Activated B cell treated with CpG ODN at 0.5 μM for 24 hours (primary cell): ENCODE measurements at regions of chr1 and their contacts with region 1.

Region 1: DNA sequence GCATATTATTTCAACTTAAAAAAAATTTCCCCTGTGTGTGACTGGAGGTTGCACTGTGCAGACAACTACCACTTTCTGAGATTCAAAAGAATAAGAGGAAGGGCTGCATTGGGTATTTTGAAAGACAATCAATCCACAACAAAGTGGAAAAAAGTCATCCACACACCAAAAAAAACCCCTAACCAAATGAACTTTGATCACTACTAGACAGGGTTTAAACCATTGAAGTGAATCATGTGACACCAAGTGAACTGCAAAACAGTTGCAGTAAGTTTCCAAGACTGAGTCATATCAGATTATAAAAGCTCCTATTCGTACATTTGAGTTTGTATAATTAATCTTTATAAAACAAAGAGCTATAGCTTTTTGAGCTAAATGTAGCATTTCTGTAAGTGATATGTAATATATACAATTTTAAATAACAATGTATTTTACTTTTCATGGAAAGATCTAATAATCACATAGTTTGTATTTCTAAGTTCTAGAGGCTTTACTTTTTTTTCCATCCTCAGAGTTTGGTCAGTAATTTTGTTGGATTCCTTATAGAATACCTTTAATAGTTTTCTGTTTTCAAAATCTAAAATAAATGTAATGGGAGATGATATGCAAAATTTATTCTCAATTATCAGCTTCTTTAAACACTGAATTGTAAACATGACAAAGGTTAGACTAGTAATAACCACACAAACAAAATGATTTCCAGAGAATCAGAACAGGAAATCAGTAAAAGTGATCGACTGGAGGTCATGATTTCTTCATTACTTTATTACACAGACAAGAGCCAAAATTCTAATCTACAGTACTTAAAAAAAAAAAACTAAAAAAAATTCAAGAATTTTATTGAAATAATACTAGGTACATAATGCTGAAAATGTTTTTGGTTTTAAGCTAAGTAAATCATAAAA is 50.5 kb upstream of the GFI1 start:
- DNase-seq: no peak
- ATAC-seq: peak; percentile 75
- H3K4me3 Mint-ChIP-seq: peak overlapping the region; percentile 59
- H3K27ac Mint-ChIP-seq: peak overlapping the region; percentile 65
- H3K4me1 Mint-ChIP-seq: peaks cover 45% of the 10 kb centered on the region
- H3K27me3 Mint-ChIP-seq: no peaks in the 10 kb centered on the region
- CTCF ChIP-seq: no peak

Region 2: DNA sequence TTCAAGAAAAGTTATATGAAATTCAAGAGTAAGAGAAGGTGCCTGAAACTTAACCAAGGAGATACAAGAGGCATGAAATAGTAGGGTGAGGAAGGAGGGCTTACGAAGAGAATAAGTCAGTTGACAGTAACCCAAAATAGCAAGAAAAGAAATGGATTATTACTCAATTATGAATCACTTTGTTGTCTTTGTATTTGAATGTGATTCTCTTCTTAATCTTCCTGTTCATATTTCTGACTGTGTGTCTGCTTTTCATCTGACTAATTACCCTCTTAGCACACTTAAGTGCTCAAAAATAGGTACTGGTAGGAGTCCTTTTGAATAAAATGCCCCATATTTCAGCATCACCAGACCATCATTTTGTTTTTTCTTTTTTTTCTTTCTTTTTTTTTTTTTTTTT is 277.9 kb before region 1 on chr1:
- CTCF ChIA-PET with region 1: no interaction called
- POLR2A ChIA-PET with region 1: no interaction called
- intact Hi-C with region 1: no loop called
- DNase-seq: no peak
- ATAC-seq: no peak
- H3K4me3 Mint-ChIP-seq: no peak overlapping the region
- H3K27ac Mint-ChIP-seq: no peak overlapping the region
- H3K4me1 Mint-ChIP-seq: no peaks in the 10 kb centered on the region
- H3K27me3 Mint-ChIP-seq: no peaks in the 10 kb centered on the region
- CTCF ChIP-seq: no peak

Region 3: GRCh38 chr1:92461364-92462097 is 75.7 kb before region 1 on chr1:
- CTCF ChIA-PET with region 1: no interaction called
- POLR2A ChIA-PET with region 1: no interaction called
- intact Hi-C with region 1: loop called (anchors 2 kb)
- DNase-seq: no peak
- ATAC-seq: peak; percentile 50
- H3K4me3 Mint-ChIP-seq: no peak overlapping the region
- H3K27ac Mint-ChIP-seq: no peak overlapping the region
- H3K4me1 Mint-ChIP-seq: peaks cover 19% of the 10 kb centered on the region
- H3K27me3 Mint-ChIP-seq: peaks cover 4% of the 10 kb centered on the region
- CTCF ChIP-seq: no peak

Region 4: DNA sequence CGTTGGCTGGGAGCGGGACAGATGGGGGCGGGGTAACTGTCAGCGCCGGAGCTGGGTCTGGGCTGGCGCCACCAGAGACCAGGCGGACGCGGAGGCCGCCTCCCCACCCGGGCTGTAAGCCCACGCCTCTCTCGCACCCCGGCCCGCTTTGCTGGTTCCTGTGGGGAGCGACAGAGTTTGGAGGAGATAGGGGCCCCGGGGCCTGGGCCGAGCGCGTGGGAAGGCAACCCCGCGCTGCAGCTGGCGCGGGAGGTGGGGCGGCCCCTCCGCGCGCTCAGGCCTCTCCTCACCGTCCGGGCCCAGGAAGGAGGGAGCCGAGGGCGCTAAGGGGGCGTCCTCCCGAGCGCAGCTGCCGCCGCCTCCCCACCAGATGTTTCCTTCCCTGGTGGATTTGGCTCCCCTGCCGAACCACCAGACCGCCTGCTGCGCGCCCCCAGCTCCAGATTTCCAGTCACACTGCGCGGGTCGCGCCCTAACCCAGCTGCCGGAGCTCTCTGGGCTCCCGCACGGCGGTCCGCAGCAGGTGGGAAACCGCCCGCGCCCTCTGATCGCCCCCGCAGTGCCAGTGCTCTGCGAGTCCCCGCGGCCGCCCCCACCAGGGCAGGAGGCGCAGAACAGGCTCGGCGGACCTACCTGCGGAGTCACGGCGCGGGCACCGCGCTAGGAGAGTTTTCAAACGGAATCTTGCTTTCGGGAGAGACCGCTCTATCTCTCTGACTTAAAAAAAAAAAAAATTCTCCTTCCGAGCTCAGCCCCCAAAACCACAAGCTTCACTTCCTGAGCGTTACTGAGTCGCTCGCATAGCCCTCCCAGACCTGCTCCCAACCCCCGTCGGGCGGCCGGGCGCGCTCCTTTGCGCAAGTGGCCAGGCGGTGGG is 51.6 kb before region 1 on chr1:
- CTCF ChIA-PET with region 1: interaction called, 5 read pairs
- POLR2A ChIA-PET with region 1: interaction called, 17 read pairs
- intact Hi-C with region 1: loop called (anchors 1 kb)
- DNase-seq: peak; percentile 67
- ATAC-seq: peak; percentile 70
- H3K4me3 Mint-ChIP-seq: peak overlapping the region; percentile 90
- H3K27ac Mint-ChIP-seq: no peak overlapping the region
- H3K4me1 Mint-ChIP-seq: peaks cover 27% of the 10 kb centered on the region
- H3K27me3 Mint-ChIP-seq: peaks cover 14% of the 10 kb centered on the region
- CTCF ChIP-seq: no peak

Region 5: GRCh38 chr1:92583821-92584760 is 46.9 kb after region 1 on chr1:
- CTCF ChIA-PET with region 1: no interaction called
- POLR2A ChIA-PET with region 1: no interaction called
- intact Hi-C with region 1: loop called (anchors 10 kb)
- DNase-seq: no peak
- ATAC-seq: peak; percentile 40
- H3K4me3 Mint-ChIP-seq: no peak overlapping the region
- H3K27ac Mint-ChIP-seq: no peak overlapping the region
- H3K4me1 Mint-ChIP-seq: no peaks in the 10 kb centered on the region
- H3K27me3 Mint-ChIP-seq: no peaks in the 10 kb centered on the region
- CTCF ChIP-seq: no peak